ENCODE measurements at regions of chr1 and their contacts with region 1.

Region 1: GRCh38 chr1:215824245-215824644 is 257.1 kb downstream of the KCTD3 start:
- DNase-seq: no peak
- ATAC-seq: peak; percentile 61
- H3K4me3 ChIP-seq: no peak overlapping the region
- H3K27ac ChIP-seq: no peak overlapping the region
- H3K4me1 ChIP-seq: no peaks in the 10 kb centered on the region
- H3K27me3 ChIP-seq: no peaks in the 10 kb centered on the region
- CTCF ChIP-seq: peak; percentile 11 to 49 (median 35); a peak in 4 of 6 replicates
- POLR2A ChIP-seq: no peak
- RAD21 ChIP-seq: peak; percentile 66

Region 2: GRCh38 chr1:216119602-216120001 is 295.4 kb after region 1 on chr1:
- CTCF ChIA-PET with region 1: no interaction called
- POLR2A ChIA-PET with region 1: no interaction called
- RAD21 ChIA-PET with region 1: no interaction called
- intact Hi-C with region 1: loop called (anchors 10 kb)
- DNase-seq: peak; percentile 1
- ATAC-seq: no peak
- H3K4me3 ChIP-seq: no peak overlapping the region
- H3K27ac ChIP-seq: no peak overlapping the region
- H3K4me1 ChIP-seq: no peaks in the 10 kb centered on the region
- H3K27me3 ChIP-seq: no peaks in the 10 kb centered on the region
- CTCF ChIP-seq: peak in 2 of 3 experiments; percentile 41 to 49; a peak in 4 of 6 replicates
- POLR2A ChIP-seq: no peak
- RAD21 ChIP-seq: peak; percentile 22; the same call in 1 of the 2 replicates

Region 3: GRCh38 chr1:216742625-216743024 is 918.4 kb after region 1 on chr1:
- CTCF ChIA-PET with region 1: no interaction called
- POLR2A ChIA-PET with region 1: no interaction called
- RAD21 ChIA-PET with region 1: no interaction called
- intact Hi-C with region 1: loop called (anchors 5 kb)
- DNase-seq: no peak
- ATAC-seq: no peak
- H3K4me3 ChIP-seq: no peak overlapping the region
- H3K27ac ChIP-seq: no peak overlapping the region
- H3K4me1 ChIP-seq: no peaks in the 10 kb centered on the region
- H3K27me3 ChIP-seq: 0 out of 2 replicates have a peak, but pooled peaks cover 4% of the 10 kb centered on the region
- CTCF ChIP-seq: 0 out of 6 replicates have a peak, but pooled peaks of 2 of the 3 experiments have one; percentile 5 to 15
- POLR2A ChIP-seq: no peak
- RAD21 ChIP-seq: no peak

Measured in HCT116 (cell line).